Activated CD4-positive, alpha-beta T cell treated with anti-CD3 and anti-CD28 coated beads, Interleukin-2, amount 10 ng/mL, durations not matched to agents 24 days and 14 days (primary cell): ENCODE measurements at regions of chr5 and their contacts with region 1.

Region 1: GRCh38 chr5:132293066-132293991 is 865 bp upstream of the SLC22A4 start:
- DNase-seq: peak; percentile 88
- H3K4me3 Mint-ChIP-seq: peak overlapping the region; percentile 96
- H3K27ac Mint-ChIP-seq: peak overlapping the region; percentile 94
- H3K4me1 Mint-ChIP-seq: peaks cover 29% of the 10 kb centered on the region
- H3K27me3 Mint-ChIP-seq: peaks cover 4% of the 10 kb centered on the region

Region 2: GRCh38 chr5:132019857-132020555 is 273.3 kb before region 1 on chr5:
- intact Hi-C with region 1: loop called (anchors 1 kb)
- DNase-seq: peak; percentile 95
- H3K4me3 Mint-ChIP-seq: peak overlapping the region; percentile 49
- H3K27ac Mint-ChIP-seq: peak overlapping the region; percentile 87
- H3K4me1 Mint-ChIP-seq: peaks cover 45% of the 10 kb centered on the region
- H3K27me3 Mint-ChIP-seq: peaks cover 41% of the 10 kb centered on the region

Region 3: GRCh38 chr5:132227485-132228240 is 65.7 kb before region 1 on chr5 and contains the start of gene P4HA2:
- intact Hi-C with region 1: loop called (anchors 2 kb)
- DNase-seq: peak; percentile 88
- H3K4me3 Mint-ChIP-seq: peak within 1 kb of the TSS; percentile 79
- H3K27ac Mint-ChIP-seq: peak within 1 kb of the TSS; percentile 18
- H3K4me1 Mint-ChIP-seq: peaks cover 46% of the 10 kb centered on the region
- H3K27me3 Mint-ChIP-seq: peaks cover 15% of the 10 kb centered on the region
- total RNA-seq, gene P4HA2: 45.5 and 49.5 TPM in 2 replicates

Region 4: DNA sequence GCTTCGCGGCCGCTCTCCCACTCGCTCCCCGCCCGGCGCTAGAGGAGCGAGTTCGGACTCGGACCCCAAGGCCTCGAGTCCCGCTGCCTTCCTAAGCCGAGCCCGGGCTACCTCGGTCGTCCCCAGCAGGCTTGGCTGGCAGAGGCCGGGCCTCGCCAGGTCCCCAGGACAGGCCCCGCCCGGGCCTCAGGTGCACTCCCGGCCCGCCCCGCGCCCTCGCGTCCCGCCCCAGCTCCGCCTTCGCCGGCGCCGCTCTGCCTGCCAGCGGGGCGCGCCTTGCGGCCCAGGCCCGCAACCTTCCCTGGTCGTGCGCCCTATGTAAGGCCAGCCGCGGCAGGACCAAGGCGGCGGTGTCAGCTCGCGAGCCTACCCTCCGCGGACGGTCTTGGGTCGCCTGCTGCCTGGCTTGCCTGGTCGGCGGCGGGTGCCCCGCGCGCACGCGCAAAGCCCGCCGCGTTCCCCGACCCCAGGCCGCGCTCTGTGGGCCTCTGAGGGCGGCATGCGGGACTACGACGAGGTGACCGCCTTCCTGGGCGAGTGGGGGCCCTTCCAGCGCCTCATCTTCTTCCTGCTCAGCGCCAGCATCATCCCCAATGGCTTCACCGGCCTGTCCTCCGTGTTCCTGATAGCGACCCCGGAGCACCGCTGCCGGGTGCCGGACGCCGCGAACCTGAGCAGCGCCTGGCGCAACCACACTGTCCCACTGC is 76.3 kb after region 1 on chr5 and contains the start of gene SLC22A5:
- intact Hi-C with region 1: loop called (anchors 5 kb)
- DNase-seq: peak; percentile 93
- H3K4me3 Mint-ChIP-seq: peak within 1 kb of the TSS; percentile 81
- H3K27ac Mint-ChIP-seq: peak within 1 kb of the TSS; percentile 63
- H3K4me1 Mint-ChIP-seq: peaks cover 22% of the 10 kb centered on the region
- H3K27me3 Mint-ChIP-seq: no peaks in the 10 kb centered on the region
- total RNA-seq, gene SLC22A5: 4.9 and 5.5 TPM in 2 replicates

Region 5: DNA sequence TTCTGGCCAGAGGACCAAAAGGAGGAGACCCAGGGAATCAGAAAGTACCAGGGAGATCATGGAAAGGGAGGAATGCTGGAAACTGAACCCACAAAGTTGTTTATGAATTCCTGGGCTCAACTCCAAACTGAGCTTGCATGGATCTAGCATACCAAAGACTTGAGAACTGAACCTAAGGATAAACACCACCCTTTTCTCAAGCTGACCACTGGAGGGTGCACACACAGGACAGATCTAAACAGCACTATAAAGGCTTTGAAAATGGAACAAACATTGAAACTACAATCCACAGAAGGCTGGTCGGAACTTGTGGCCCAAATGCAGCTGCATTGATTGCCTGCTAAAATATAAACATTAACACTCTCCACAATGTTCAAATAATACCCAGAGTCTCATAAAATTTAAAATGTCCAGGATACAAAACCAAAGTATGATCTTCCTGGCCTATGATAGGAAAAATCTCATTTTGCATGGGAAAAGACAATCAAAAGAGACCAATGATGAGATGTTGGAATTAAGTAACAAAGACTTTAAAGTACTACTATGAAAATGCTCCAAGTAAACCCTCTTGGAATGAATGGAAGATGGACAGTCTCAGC is 212.9 kb after region 1 on chr5:
- intact Hi-C with region 1: no loop called
- DNase-seq: peak; percentile 74
- H3K4me3 Mint-ChIP-seq: no peak overlapping the region
- H3K27ac Mint-ChIP-seq: no peak overlapping the region
- H3K4me1 Mint-ChIP-seq: peaks cover 27% of the 10 kb centered on the region
- H3K27me3 Mint-ChIP-seq: peaks cover 10% of the 10 kb centered on the region

Region 6: DNA sequence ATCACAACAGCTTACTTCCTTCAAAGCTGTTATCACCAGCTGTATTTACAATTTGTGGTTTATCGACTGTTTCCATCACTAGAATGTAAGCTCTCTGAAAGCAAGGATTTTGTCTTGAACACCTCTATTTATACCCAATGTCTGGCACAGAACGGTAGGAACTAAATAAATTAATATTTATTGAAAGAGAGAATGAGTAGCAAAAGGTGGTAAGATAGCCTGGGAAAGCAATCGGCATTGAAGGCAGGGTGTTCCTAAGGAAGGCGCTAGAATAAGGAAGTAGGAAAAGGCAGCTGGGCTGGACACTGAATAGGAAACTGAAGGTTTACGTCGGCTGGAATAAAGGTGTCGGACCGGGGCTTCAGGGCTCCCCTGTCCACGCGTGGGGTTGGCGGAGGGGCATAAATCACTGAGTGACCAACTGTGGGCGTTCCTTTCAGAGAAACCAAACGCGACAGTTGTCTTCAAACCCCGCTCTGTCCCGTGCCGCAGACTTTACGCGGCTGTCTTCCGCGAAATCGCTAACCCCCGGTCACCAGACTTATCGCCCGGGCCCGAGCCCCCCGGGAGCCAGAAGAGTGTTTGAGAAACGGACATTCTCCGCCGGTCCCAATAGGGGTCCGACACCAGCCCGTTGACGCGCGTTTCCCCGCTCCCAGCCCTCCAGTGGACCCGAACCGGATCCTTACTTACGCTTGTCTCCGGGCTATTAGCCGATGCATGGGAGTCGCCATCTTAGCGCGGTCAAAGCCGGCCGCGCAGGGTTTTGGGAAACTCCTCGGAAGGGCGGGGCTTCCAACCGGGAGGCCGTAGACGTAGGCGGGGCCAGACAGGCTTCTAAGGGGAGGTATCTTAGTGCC is 732.7 kb after region 1 on chr5 and contains the start of gene ZCCHC10:
- intact Hi-C with region 1: loop called (anchors 2 kb)
- DNase-seq: peak; percentile 98
- H3K4me3 Mint-ChIP-seq: peak within 1 kb of the TSS; percentile 88
- H3K27ac Mint-ChIP-seq: peak within 1 kb of the TSS; percentile 91
- H3K4me1 Mint-ChIP-seq: peaks cover 13% of the 10 kb centered on the region
- H3K27me3 Mint-ChIP-seq: peaks cover 6% of the 10 kb centered on the region
- total RNA-seq, gene ZCCHC10: 32.2 and 36.0 TPM in 2 replicates